Activated CD8-positive, alpha-beta memory T cell treated with anti-CD3 and anti-CD28 coated beads, Interleukin-2, amount 10 ng/mL, durations not matched to agents 7 days and 5 days (primary cell): ENCODE measurements at regions of chr3 and their contacts with region 1.

Region 1: DNA sequence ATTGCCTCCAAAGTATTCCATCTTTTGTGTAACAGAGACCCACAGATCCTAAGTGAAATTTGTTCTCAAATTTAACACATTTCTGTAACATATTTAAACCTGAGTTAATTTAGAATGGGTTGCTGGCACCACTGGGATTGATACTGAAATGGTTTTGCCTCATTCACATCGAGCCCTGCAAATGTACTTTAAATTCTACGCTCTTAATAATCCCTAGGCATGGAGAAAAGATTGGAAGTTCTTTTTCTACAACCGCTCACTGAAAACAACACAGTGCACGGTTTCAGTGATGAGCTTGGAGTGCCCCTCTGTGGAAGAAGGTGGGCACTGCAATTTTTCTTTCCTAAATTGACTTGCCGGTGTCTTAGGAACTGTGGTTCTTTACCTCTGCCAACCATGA is 109.9 kb upstream of the ATP11B start:
- DNase-seq: peak; percentile 73
- ATAC-seq: peak; percentile 68
- H3K4me3 Mint-ChIP-seq: peak overlapping the region; percentile 59
- H3K27ac Mint-ChIP-seq: no peak overlapping the region
- H3K4me1 Mint-ChIP-seq: peaks cover 8% of the 10 kb centered on the region
- H3K27me3 Mint-ChIP-seq: peaks cover 51% of the 10 kb centered on the region

Region 2: DNA sequence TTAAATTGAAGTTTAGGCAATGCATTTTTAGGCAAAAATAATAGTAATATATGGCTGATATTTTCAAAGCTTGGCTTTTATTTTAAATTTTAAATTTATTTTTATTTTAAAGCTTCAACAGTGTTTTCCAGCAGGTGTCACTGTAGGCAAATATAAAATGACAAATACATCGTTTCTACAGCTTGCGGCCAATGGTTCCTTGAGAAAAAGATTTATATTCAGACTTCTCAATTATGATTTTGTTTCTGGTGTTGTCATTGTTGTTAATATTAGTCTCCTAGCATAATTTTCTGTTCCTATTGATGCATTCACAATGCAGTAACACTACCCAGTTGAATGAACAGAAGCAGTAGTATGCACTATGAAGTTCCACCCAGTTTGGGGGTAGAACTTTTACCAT is 1473.2 kb before region 1 on chr3:
- CTCF ChIA-PET with region 1: interaction called, 11 read pairs
- DNase-seq: no peak
- ATAC-seq: no peak
- H3K4me3 Mint-ChIP-seq: no peak overlapping the region
- H3K27ac Mint-ChIP-seq: no peak overlapping the region
- H3K4me1 Mint-ChIP-seq: no peaks in the 10 kb centered on the region
- H3K27me3 Mint-ChIP-seq: peaks cover 5% of the 10 kb centered on the region

Region 3: GRCh38 chr3:181700168-181701087 is 983.0 kb before region 1 on chr3:
- CTCF ChIA-PET with region 1: interaction called, 15 read pairs
- DNase-seq: peak; percentile 61
- ATAC-seq: peak; percentile 81
- H3K4me3 Mint-ChIP-seq: peak overlapping the region; percentile 63
- H3K27ac Mint-ChIP-seq: peak overlapping the region; percentile 25
- H3K4me1 Mint-ChIP-seq: peaks cover 20% of the 10 kb centered on the region
- H3K27me3 Mint-ChIP-seq: peaks cover 88% of the 10 kb centered on the region

Region 4: GRCh38 chr3:181709537-181710279 is 973.7 kb before region 1 on chr3:
- CTCF ChIA-PET with region 1: interaction called, 23 read pairs
- DNase-seq: peak; percentile 70
- ATAC-seq: no peak
- H3K4me3 Mint-ChIP-seq: no peak overlapping the region
- H3K27ac Mint-ChIP-seq: peak overlapping the region; percentile 67
- H3K4me1 Mint-ChIP-seq: peaks cover 5% of the 10 kb centered on the region
- H3K27me3 Mint-ChIP-seq: peaks cover 73% of the 10 kb centered on the region

Region 5: GRCh38 chr3:182698078-182698477 is 14.6 kb after region 1 on chr3:
- CTCF ChIA-PET with region 1: no interaction called
- DNase-seq: no peak
- ATAC-seq: no peak
- H3K4me3 Mint-ChIP-seq: no peak overlapping the region
- H3K27ac Mint-ChIP-seq: no peak overlapping the region
- H3K4me1 Mint-ChIP-seq: no peaks in the 10 kb centered on the region
- H3K27me3 Mint-ChIP-seq: peaks cover 23% of the 10 kb centered on the region